OCI-LY7 (cell line): ENCODE measurements at regions of chr5 and their contacts with region 1.

Region 1: DNA sequence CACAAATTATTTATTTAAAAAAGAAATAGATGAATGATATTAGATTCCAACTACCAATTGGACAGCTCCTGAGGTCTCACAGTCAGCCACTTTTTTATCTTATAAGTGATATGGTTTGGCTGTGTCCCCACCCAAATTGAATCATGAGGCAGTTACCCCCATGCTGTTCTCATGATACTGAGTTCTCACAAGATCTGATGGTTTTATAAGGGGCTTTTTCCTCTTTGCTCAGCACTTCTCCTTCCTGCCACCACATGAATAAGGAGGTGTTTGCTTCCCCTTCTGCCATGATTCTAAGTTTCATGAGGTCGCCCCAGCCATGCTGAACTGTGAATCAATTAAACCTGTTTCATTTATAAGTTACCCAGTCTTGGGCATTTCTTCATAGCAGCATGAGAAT is 12.9 kb downstream of the NLN start:
- DNase-seq: no peak
- H3K4me3 ChIP-seq: no peak overlapping the region
- H3K27ac ChIP-seq: no peak overlapping the region
- H3K4me1 ChIP-seq: peaks cover 13% of the 10 kb centered on the region
- CTCF ChIP-seq: no peak

Region 2: GRCh38 chr5:65290677-65291076 is 444.2 kb before region 1 on chr5:
- CTCF ChIA-PET with region 1: no interaction called
- POLR2A ChIA-PET with region 1: no interaction called
- intact Hi-C with region 1: no loop called
- DNase-seq: no peak
- H3K4me3 ChIP-seq: no peak overlapping the region
- H3K27ac ChIP-seq: no peak overlapping the region
- H3K4me1 ChIP-seq: peaks cover 5% of the 10 kb centered on the region
- CTCF ChIP-seq: no peak

Region 3: DNA sequence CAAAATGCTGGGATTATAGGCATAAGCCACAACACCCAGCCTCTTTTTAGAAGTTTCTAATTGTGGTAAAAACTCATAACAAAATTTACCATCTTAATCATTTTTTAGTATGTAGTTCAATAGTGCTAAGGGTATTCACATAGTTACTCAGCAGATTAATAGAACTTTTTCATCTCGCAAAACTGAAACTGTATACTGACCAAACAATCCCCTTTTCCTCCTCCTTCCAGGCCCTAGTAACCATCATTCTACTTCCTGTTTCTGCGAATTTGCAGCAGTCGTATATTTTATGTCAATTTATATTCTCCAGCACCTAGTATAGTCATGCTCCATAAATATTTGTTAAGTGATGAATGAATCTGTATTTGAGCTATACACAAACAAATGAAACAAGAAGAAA is 105.2 kb after region 1 on chr5:
- CTCF ChIA-PET with region 1: no interaction called
- POLR2A ChIA-PET with region 1: no interaction called
- intact Hi-C with region 1: no loop called
- DNase-seq: no peak
- H3K4me3 ChIP-seq: no peak overlapping the region
- H3K27ac ChIP-seq: no peak overlapping the region
- H3K4me1 ChIP-seq: no peaks in the 10 kb centered on the region
- CTCF ChIP-seq: no peak

Region 4: GRCh38 chr5:66382152-66382551 is 647.2 kb after region 1 on chr5:
- CTCF ChIA-PET with region 1: no interaction called
- POLR2A ChIA-PET with region 1: interaction called, 10 read pairs
- intact Hi-C with region 1: no loop called
- DNase-seq: no peak
- H3K4me3 ChIP-seq: no peak overlapping the region
- H3K27ac ChIP-seq: no peak overlapping the region
- H3K4me1 ChIP-seq: no peaks in the 10 kb centered on the region
- CTCF ChIP-seq: no peak

Region 5: DNA sequence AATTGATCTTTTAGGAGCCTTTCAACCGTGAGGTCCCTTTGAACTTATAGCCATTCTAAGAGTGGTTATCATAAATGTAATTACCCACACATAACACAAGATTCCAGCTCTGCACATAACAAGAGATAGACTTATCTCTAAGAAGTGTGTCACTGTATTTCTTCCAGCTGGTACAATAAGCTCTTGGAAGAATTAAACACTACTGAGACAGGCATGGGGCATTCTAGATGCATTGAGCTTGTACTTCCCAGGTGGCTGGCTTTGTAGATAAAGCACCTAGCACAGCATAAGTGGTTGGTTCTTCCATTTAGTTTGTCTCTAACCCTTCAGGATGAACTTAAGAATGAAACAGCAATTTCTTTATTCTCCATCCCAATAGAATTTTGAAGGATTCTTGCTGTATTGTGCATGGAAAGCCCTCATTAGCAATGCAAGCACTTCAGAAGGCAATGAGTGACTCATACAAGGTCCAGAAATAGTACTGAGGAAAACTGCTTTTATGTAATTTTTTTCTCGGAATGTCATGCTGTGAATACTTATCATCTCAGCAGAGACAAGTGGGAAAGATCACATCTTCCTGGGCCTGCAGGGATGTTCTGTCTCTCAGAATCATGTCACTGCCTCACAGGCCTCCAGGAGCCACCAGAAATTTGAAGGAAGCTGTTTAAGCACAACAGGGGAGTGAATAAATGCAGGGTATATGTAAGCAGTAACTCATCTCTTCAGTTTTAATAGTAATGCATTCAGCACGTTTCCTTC is 1552.8 kb after region 1 on chr5:
- CTCF ChIA-PET with region 1: no interaction called
- POLR2A ChIA-PET with region 1: no interaction called
- intact Hi-C with region 1: no loop called
- DNase-seq: no peak
- H3K4me3 ChIP-seq: no peak overlapping the region
- H3K27ac ChIP-seq: no peak overlapping the region
- H3K4me1 ChIP-seq: no peaks in the 10 kb centered on the region
- CTCF ChIP-seq: no peak